ENCODE measurements at regions of chr4 and their contacts with region 1.

Region 1: DNA sequence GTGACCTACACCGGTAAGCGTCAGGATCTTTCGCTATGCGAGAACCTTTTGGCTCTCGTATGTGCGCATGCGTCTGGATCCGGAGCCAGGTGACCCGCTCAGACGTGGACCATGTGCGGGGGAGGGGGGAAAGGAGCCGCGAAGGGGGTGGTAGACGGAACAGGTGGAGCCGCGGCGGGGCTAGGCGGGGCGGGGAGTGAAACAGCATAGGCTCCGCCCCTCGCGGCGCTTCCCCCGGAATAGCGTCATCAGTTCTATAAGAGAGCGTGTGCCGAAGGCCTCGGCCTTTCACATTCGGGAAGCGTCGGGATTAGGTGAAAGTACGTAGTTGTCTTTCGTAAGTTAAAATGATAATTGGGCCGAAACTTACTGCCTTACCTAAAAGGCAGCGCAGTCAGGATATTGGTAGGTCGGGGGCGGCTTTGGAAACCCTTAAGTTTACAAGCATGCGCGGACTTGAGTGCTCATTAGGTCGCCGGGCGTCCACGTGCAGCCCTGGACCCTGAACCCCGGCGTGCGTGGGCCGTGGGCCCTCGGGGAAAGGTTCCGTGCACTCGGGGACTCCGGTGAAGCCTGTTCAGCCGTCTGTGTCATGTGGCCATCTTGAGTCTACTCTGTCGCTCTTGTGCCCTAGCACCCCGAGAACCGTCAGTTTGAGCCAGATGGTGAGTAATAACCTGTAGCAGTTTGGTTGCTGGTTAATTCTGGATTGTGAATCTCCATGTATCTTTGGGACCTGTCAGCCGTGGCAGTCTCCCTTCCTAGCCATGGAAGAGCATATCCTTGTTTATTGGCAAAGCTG is 74.1 kb downstream of the PRSS12 start:
- DNase-seq: peak; percentile 96
- H3K4me3 ChIP-seq: peak overlapping the region; percentile 91
- H3K27ac ChIP-seq: peak overlapping the region; percentile 86
- H3K4me1 ChIP-seq: peaks cover 36% of the 10 kb centered on the region
- H3K27me3 ChIP-seq: no peaks in the 10 kb centered on the region

Region 2: GRCh38 chr4:118018381-118019145 is 260.1 kb before region 1 on chr4:
- in situ Hi-C with region 1: no loop called
- DNase-seq: no peak
- H3K4me3 ChIP-seq: no peak overlapping the region
- H3K27ac ChIP-seq: no peak overlapping the region
- H3K4me1 ChIP-seq: no peaks in the 10 kb centered on the region
- H3K27me3 ChIP-seq: no peaks in the 10 kb centered on the region

Region 3: GRCh38 chr4:118348886-118349285 is 70.2 kb after region 1 on chr4:
- in situ Hi-C with region 1: loop called (anchors 5 kb)
- DNase-seq: no peak
- H3K4me3 ChIP-seq: no peak overlapping the region
- H3K27ac ChIP-seq: no peak overlapping the region
- H3K4me1 ChIP-seq: peaks cover 30% of the 10 kb centered on the region
- H3K27me3 ChIP-seq: no peaks in the 10 kb centered on the region